ENCODE measurements at regions of chr6 and their contacts with region 1.

Region 1: GRCh38 chr6:168884646-168885086 is 369.0 kb downstream of the THBS2 start:
- DNase-seq: peak; percentile 9
- H3K4me3 ChIP-seq: no peak overlapping the region
- H3K27ac ChIP-seq: no peak overlapping the region
- H3K4me1 ChIP-seq: no peaks in the 10 kb centered on the region
- H3K27me3 ChIP-seq: peaks cover 2% of the 10 kb centered on the region
- CTCF ChIP-seq: peak; percentile 35 to 79

Region 2: GRCh38 chr6:168060521-168060931 is 824.1 kb before region 1 on chr6:
- CTCF ChIA-PET with region 1: no interaction called
- dilution Hi-C with region 1: no loop called
- in situ Hi-C with region 1: no loop called
- intact Hi-C with region 1: loop called (anchors 2 kb)
- DNase-seq: peak; percentile 3
- H3K4me3 ChIP-seq: no peak overlapping the region
- H3K27ac ChIP-seq: no peak overlapping the region
- H3K4me1 ChIP-seq: peaks cover 10% of the 10 kb centered on the region
- H3K27me3 ChIP-seq: no peaks in the 10 kb centered on the region
- CTCF ChIP-seq: peak; percentile 37 to 61

Region 3: GRCh38 chr6:168157272-168158007 is 727.2 kb before region 1 on chr6:
- CTCF ChIA-PET with region 1: no interaction called
- dilution Hi-C with region 1: no loop called
- in situ Hi-C with region 1: no loop called
- intact Hi-C with region 1: loop called (anchors 10 kb)
- DNase-seq: peak; percentile 45
- H3K4me3 ChIP-seq: no peak overlapping the region
- H3K27ac ChIP-seq: no peak overlapping the region
- H3K4me1 ChIP-seq: no peaks in the 10 kb centered on the region
- H3K27me3 ChIP-seq: no peaks in the 10 kb centered on the region
- CTCF ChIP-seq: no peak